ENCODE measurements at regions of chr1 and their contacts with region 1.

Region 1: DNA sequence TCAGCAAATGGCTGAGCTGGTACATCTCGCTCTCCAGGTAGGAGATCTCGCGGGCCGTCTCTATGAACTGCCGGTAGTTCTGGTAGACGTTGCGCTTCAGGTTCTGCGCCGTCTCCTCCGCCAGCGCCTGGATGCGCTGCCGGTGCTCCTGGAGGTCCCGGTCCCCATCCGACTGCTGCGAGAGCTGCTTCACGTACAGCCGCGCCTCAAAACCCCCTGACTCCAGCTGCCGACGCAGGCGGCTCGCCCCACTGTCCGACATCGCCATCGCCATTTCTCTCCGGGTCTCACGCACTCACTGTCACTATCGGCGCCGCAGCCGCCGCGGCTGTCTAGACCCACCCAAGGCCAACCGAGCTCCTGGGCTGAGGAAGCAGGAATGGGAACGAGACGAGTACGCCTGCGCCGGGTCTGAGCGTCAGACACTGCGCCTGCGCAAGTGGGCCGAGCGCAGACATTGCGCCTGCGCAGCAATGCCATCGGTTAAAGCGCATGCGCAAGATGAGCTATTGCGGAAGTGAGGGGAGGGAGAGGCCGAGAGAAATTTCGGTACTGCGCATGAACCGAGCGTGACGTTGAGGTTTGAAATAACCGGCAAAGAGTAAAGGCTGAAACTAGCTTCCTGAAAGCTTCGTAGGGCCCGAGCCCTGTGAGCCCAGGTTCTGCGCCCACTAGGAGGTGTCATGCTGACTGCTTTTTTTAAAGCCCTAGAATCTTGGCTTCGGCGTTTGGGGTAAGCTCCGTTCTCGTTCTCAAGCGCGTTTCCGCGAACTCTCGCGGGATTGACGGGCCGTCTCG is at the start of gene EXOC8:
- DNase-seq: peak; percentile 99
- ATAC-seq: peak; percentile 78
- H3K4me3 Mint-ChIP-seq: peak within 1 kb of the TSS; percentile 99
- H3K27ac Mint-ChIP-seq: peak within 1 kb of the TSS; percentile 99
- H3K4me1 Mint-ChIP-seq: peaks cover 66% of the 10 kb centered on the region
- H3K27me3 Mint-ChIP-seq: peaks cover 1% of the 10 kb centered on the region
- CTCF ChIP-seq: no peak
- total RNA-seq, gene EXOC8: 21.7 and 24.9 TPM in 2 replicates

Region 2: DNA sequence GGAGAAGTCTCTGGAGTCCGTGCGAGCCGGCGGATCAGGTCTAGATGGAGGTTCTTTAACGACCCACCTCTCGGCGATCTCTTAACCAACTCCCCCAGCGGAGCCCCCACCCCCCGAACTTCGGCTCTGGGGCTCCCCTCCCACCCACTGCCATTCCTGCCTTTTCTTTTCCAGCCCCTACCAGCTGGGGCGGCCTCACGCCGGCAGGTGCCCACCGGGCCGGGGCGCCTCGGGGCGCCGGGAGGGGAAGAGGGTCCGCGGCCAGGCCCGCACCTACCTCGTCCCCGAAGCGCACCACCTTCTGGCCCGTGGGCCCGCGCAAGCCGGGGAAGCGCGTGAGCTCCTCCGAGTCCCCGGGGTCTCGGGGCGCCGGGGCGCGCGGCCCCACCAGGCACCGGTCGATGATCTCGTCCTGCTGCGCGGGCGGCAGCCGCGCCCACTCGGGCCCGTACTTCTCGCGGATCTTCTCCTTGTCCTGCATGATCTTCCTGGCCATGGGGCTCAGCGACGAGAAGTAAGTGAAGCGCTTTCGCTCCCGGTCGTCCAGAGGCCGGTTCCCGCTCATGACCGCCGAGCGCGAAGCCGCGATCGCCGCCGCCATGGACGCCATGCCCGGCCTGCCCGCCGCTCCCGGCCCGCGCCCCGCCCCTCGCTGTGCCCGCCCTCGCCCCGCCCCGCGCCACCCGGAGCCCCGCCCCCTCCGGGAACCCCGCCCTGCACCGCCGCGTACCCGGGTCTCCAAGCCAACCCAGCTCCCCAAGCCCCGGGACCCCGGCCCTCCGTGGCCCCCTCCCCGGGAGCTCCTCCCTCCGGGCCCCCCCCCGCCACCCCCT is 469.6 kb before region 1 on chr1 and contains the start of gene C1orf198:
- CTCF ChIA-PET with region 1: no interaction called
- POLR2A ChIA-PET with region 1: no interaction called
- intact Hi-C with region 1: loop called (anchors 5 kb)
- DNase-seq: peak; percentile 81
- ATAC-seq: peak; percentile 95
- H3K4me3 Mint-ChIP-seq: peak within 1 kb of the TSS; percentile 89
- H3K27ac Mint-ChIP-seq: peak within 1 kb of the TSS; percentile 56
- H3K4me1 Mint-ChIP-seq: peaks cover 13% of the 10 kb centered on the region
- H3K27me3 Mint-ChIP-seq: peaks cover 21% of the 10 kb centered on the region
- CTCF ChIP-seq: no peak
- total RNA-seq, gene C1orf198: 3.5 and 3.9 TPM in 2 replicates

Region 3: GRCh38 chr1:231040019-231040799 is 297.5 kb before region 1 on chr1 and contains the start of gene FAM89A:
- CTCF ChIA-PET with region 1: no interaction called
- POLR2A ChIA-PET with region 1: no interaction called
- intact Hi-C with region 1: loop called (anchors 2 kb)
- DNase-seq: peak; percentile 70
- ATAC-seq: peak; percentile 84
- H3K4me3 Mint-ChIP-seq: peak within 1 kb of the TSS; percentile 85
- H3K27ac Mint-ChIP-seq: peak within 1 kb of the TSS; percentile 35
- H3K4me1 Mint-ChIP-seq: peaks cover 17% of the 10 kb centered on the region
- H3K27me3 Mint-ChIP-seq: peaks cover 4% of the 10 kb centered on the region
- CTCF ChIP-seq: no peak
- total RNA-seq, gene FAM89A: 5.2 and 5.3 TPM in 2 replicates

Region 4: DNA sequence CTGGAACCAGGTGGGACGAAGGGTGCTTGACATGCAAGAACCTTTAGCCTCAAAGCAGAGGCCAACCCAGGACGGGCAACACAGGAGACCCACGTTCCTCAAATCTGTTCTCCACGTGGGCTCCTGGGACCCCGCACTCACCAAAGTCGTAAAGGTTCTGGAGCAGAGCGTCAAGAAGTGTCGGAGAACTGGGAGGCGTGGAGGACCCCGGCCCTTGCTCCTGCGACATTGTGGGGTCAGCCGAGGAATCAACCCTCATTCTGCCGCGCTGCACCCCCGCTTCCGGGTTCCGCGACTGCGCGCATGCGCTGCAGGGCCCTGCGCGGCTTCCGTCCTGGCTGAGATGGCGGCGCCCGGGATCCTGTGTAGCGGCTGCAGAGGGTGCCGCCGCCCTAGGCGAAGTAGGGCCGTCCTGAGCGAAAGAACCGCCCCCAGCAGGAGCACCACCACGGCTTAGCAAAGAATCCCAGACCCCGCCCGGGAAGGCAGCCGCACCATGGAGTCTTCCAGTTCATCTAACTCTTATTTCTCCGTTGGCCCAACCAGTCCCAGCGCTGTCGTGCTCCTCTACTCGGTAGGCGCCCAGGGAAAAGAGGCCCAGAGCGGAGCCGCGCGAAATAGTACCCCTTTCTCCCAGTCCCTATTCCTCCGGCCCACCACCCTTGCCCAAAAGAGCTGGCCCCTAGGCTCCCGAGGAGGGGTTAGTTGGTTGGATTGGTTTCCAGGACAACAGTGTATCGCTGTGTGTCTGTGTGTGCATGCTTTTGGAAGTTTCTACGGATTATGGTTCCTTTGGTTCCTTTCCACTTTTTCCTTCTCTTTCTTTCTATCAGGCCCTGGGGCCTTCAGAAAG is 96.6 kb before region 1 on chr1 and contains the start of gene GNPAT:
- CTCF ChIA-PET with region 1: no interaction called
- POLR2A ChIA-PET with region 1: interaction called, 18 read pairs
- intact Hi-C with region 1: loop called (anchors 1 kb)
- DNase-seq: peak; percentile 94
- ATAC-seq: peak; percentile 98
- H3K4me3 Mint-ChIP-seq: peak within 1 kb of the TSS; percentile 93
- H3K27ac Mint-ChIP-seq: peak within 1 kb of the TSS; percentile 94
- H3K4me1 Mint-ChIP-seq: peaks cover 58% of the 10 kb centered on the region
- H3K27me3 Mint-ChIP-seq: no peaks in the 10 kb centered on the region
- CTCF ChIP-seq: no peak
- total RNA-seq, gene GNPAT: 45.7 and 47.4 TPM in 2 replicates

Region 5: GRCh38 chr1:231528172-231529029 is 190.7 kb after region 1 on chr1 and contains the start of gene TSNAX:
- CTCF ChIA-PET with region 1: no interaction called
- POLR2A ChIA-PET with region 1: interaction called, 13 read pairs
- intact Hi-C with region 1: loop called (anchors 1 kb)
- DNase-seq: peak; percentile 89
- ATAC-seq: peak; percentile 95
- H3K4me3 Mint-ChIP-seq: peak within 1 kb of the TSS; percentile 99
- H3K27ac Mint-ChIP-seq: peak within 1 kb of the TSS; percentile 100
- H3K4me1 Mint-ChIP-seq: peaks cover 33% of the 10 kb centered on the region
- H3K27me3 Mint-ChIP-seq: no peaks in the 10 kb centered on the region
- CTCF ChIP-seq: no peak
- total RNA-seq, gene TSNAX: 30.0 and 38.7 TPM in 2 replicates